ENCODE measurements at regions of chr14 and their contacts with region 1.

Region 1: GRCh38 chr14:75126679-75127473 is at the start of gene NEK9:
- DNase-seq: peak; percentile 86 to 92 (median 90)
- H3K4me3 ChIP-seq: peak within 1 kb of the TSS; percentile 80 to 99
- H3K4me3 Mint-ChIP-seq: peak within 1 kb of the TSS; percentile 88 to 98 (median 97)
- H3K27ac ChIP-seq: peak within 1 kb of the TSS; percentile 94
- H3K27ac Mint-ChIP-seq: peak within 1 kb of the TSS; percentile 95 to 99 (median 99)
- H3K4me1 ChIP-seq: peaks cover 42% of the 10 kb centered on the region
- H3K4me1 Mint-ChIP-seq: peaks cover 29 to 52% (median 34%) of the 10 kb centered on the region in 4 donors
- H3K27me3 ChIP-seq: no peaks in the 10 kb centered on the region
- H3K27me3 Mint-ChIP-seq: no peaks in the 10 kb centered on the region
- total RNA-seq, gene NEK9: 129 to 133 TPM

Region 2: GRCh38 chr14:75063407-75064213 is 63.3 kb before region 1 on chr14 and contains the start of gene ACYP1:
- CTCF ChIA-PET with region 1: no interaction called
- POLR2A ChIA-PET with region 1: interaction called, 11 read pairs
- intact Hi-C with region 1: no loop called
- DNase-seq: peak; percentile 85 to 89 (median 87)
- H3K4me3 ChIP-seq: peak within 1 kb of the TSS; percentile 85 to 97
- H3K4me3 Mint-ChIP-seq: peak within 1 kb of the TSS; percentile 96 to 100 (median 99)
- H3K27ac ChIP-seq: peak within 1 kb of the TSS; percentile 76
- H3K27ac Mint-ChIP-seq: peak within 1 kb of the TSS; percentile 92 to 98 (median 97)
- H3K4me1 ChIP-seq: peaks cover 19% of the 10 kb centered on the region
- H3K4me1 Mint-ChIP-seq: peaks cover 16 to 42% (median 24%) of the 10 kb centered on the region in 4 donors
- H3K27me3 ChIP-seq: no peaks in the 10 kb centered on the region
- H3K27me3 Mint-ChIP-seq: no peaks in the 10 kb centered on the region
- total RNA-seq, gene ACYP1: 38.5 to 46.6 TPM

Region 3: DNA sequence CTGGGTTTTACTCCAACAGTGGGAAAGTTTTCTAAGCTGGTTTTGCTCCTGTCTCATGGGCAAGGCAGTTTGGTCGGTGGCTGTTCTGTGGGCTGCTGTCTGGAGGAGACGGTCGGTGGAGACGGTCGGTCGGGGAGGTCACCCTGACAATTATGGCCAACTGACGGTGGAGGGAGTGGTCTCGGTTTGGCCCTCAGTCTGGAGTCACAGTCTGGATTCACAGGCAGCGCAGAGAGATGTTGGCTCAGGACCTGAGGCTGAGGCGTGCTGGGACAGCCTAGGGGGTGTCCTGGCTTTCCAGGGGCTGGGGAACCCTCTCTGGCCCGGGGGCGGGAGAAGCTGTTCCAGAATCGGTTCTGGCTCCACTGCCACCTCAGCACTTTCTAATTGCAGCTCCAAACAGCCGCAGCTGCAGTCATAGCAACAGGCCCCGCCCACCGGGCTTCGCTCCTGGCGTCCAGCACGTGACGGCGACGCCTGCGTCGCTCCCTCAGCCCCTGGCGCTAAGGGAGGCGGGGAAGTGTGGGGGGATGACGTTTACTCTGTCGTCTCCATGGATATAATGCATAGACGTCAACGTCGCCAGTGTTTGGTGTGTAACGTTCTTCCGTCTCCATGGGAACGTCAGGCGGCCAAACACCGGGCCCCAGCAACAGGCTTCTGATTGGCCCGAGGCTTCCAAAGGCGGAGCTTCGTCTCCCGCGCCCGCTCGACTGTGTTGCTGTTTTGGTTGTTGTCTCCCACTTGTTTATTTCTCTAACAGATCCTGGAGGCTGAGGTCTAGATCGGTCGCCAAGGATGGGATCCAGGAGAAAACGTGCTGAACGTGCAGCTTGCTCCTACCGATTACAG is 132.0 kb after region 1 on chr14:
- CTCF ChIA-PET with region 1: no interaction called
- POLR2A ChIA-PET with region 1: interaction called, 7 read pairs
- intact Hi-C with region 1: loop called (anchors 1 kb)
- DNase-seq: peak; percentile 99 to 100 (median 100)
- H3K4me3 ChIP-seq: peak overlapping the region; percentile 52 to 54
- H3K4me3 Mint-ChIP-seq: peak overlapping the region; percentile 82 to 90 (median 88)
- H3K27ac ChIP-seq: peak overlapping the region; percentile 95
- H3K27ac Mint-ChIP-seq: peak overlapping the region; percentile 98 to 100 (median 100)
- H3K4me1 ChIP-seq: peaks cover 23% of the 10 kb centered on the region
- H3K4me1 Mint-ChIP-seq: peaks cover 21 to 44% (median 33%) of the 10 kb centered on the region in 4 donors
- H3K27me3 ChIP-seq: no peaks in the 10 kb centered on the region
- H3K27me3 Mint-ChIP-seq: no peaks in the 10 kb centered on the region

Region 4: GRCh38 chr14:75566321-75566720 is 439.4 kb after region 1 on chr14:
- CTCF ChIA-PET with region 1: interaction called, 4 read pairs
- POLR2A ChIA-PET with region 1: no interaction called
- intact Hi-C with region 1: loop called (anchors 5 kb)
- DNase-seq: peak; percentile 49 to 86 (median 69)
- H3K4me3 ChIP-seq: no peak overlapping the region
- H3K4me3 Mint-ChIP-seq: peak overlapping the region in 4 of 8 donors; percentile 6 to 63 (median 22)
- H3K27ac ChIP-seq: peak overlapping the region; percentile 13
- H3K27ac Mint-ChIP-seq: peak overlapping the region; percentile 92 to 98 (median 94)
- H3K4me1 ChIP-seq: peaks cover 36% of the 10 kb centered on the region
- H3K4me1 Mint-ChIP-seq: peaks cover 27 to 56% (median 34%) of the 10 kb centered on the region in 4 donors
- H3K27me3 ChIP-seq: no peaks in the 10 kb centered on the region
- H3K27me3 Mint-ChIP-seq: peaks cover 0 to 6% of the 10 kb centered on the region in 2 donors